Mammary epithelial cell (primary cell): ENCODE measurements at regions of chr17 and their contacts with region 1.

Region 1: DNA sequence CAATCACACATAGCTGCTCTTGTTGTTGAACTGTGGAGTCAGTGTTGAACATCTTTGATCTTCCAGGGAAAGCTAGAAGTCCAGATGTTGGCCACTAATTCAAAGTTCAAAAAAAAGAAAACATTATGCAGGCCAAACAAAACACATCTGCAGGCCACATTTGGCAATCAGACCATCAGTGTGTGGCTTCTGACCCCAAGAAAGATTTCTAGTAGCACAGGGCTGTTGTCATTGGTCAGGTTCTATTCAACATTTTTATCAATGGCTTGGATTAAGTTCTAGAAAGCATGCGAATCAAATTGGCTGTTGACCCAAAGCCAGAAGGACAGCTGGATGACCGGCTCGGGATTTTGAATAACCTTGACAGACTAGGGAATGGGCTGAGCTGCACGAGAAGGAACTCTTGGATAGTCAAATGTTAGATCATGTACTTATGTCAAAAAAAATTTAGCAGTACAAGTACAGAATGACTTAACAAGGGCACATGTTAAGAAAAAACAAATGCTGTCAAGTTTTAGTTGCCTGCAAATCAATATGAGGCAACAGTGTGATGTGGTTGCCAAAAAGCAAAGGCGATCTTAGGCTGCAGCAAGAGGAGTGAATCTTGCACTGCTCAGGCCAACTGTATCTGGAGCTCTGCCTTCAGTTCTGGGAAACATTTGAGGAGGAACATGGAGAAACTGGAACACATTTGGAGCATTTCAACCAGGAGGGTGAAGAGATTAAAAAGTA is 187.6 kb downstream of the RGS9 start:
- DNase-seq: no peak
- H3K4me3 ChIP-seq: no peak overlapping the region
- H3K27ac ChIP-seq: no peak overlapping the region
- H3K4me1 ChIP-seq: no peaks in the 10 kb centered on the region
- H3K27me3 ChIP-seq: no peaks in the 10 kb centered on the region
- CTCF ChIP-seq: no peak

Region 2: GRCh38 chr17:65173284-65173793 is 151.4 kb before region 1 on chr17:
- CTCF ChIA-PET with region 1: no interaction called
- dilution Hi-C with region 1: no loop called
- in situ Hi-C with region 1: no loop called
- intact Hi-C with region 1: no loop called
- DNase-seq: no peak
- H3K4me3 ChIP-seq: no peak overlapping the region
- H3K27ac ChIP-seq: no peak overlapping the region
- H3K4me1 ChIP-seq: no peaks in the 10 kb centered on the region
- H3K27me3 ChIP-seq: no peaks in the 10 kb centered on the region
- CTCF ChIP-seq: no peak

Region 3: GRCh38 chr17:65278050-65278819 is 46.5 kb before region 1 on chr17:
- CTCF ChIA-PET with region 1: no interaction called
- dilution Hi-C with region 1: no loop called
- in situ Hi-C with region 1: no loop called
- intact Hi-C with region 1: no loop called
- DNase-seq: peak; percentile 17
- H3K4me3 ChIP-seq: no peak overlapping the region
- H3K27ac ChIP-seq: no peak overlapping the region
- H3K4me1 ChIP-seq: no peaks in the 10 kb centered on the region
- H3K27me3 ChIP-seq: no peaks in the 10 kb centered on the region
- CTCF ChIP-seq: peak; percentile 34 to 46

Region 4: DNA sequence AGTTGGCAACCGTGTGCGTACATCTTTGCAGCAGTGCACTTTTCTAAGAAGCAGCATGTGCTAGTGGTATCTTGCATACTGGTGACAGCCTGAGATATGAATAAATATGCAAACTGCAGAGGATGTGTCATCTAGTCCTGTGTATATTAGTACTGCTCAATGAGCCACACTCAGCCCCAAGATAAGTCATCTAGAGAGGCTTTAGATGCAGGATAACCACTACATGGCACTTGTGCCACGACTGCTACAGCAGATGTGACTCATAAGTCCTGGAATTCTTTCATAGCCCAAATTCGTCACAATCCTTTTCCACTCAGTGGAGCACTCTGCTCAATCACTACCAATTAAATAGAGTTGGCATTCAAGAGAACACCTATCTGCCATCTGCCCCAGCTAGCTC is 65.2 kb after region 1 on chr17:
- CTCF ChIA-PET with region 1: no interaction called
- dilution Hi-C with region 1: loop called (anchors 10 kb)
- in situ Hi-C with region 1: no loop called
- intact Hi-C with region 1: no loop called
- DNase-seq: peak; percentile 27
- H3K4me3 ChIP-seq: no peak overlapping the region
- H3K27ac ChIP-seq: no peak overlapping the region
- H3K4me1 ChIP-seq: no peaks in the 10 kb centered on the region
- H3K27me3 ChIP-seq: no peaks in the 10 kb centered on the region
- CTCF ChIP-seq: no peak